HEK293 (cell line): ENCODE measurements at regions of chr1 and their contacts with region 1.

Region 1: DNA sequence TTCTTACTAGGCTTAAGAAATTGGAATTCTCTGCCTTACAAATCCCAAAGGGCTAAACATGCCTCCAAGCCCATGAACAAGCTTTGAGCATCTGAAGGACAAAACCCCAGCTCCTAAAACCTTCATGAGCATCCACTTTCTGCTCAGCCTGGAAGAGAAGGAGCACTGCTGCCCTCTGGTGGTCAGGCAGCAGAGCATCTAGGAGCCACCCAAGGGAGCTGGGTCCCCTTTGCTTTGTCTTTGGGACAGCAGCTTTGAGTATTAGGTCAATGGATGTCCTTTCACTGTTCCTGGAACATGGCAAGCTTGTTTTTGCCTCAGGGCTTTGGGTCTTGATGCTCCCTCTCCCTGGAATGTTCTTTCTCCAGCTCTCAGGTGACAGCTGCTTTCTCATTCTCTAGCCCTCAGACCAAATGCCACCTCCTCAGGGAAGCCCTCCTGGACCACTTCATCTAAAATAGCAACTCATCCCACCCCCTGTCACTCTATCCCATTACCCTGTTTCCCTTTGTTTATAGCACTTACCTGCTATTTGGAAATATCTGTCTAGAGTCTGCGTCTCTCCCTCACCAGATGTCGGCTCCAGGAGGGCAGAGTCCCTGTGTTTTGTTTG is 25.7 kb downstream of the RAB7B start:
- H3K4me3 ChIP-seq: no peak overlapping the region
- H3K27ac ChIP-seq: no peak overlapping the region
- H3K4me1 ChIP-seq: no peaks in the 10 kb centered on the region
- CTCF ChIP-seq: peak; percentile 88

Region 2: GRCh38 chr1:204924013-204924967 is 1053.2 kb before region 1 on chr1:
- CTCF ChIA-PET with region 1: no interaction called
- POLR2A ChIA-PET with region 1: no interaction called
- H3K4me3 ChIP-seq: no peak overlapping the region
- H3K27ac ChIP-seq: no peak overlapping the region
- H3K4me1 ChIP-seq: peaks cover 3% of the 10 kb centered on the region; the same call in 1 of the 2 replicates
- CTCF ChIP-seq: no peak

Region 3: DNA sequence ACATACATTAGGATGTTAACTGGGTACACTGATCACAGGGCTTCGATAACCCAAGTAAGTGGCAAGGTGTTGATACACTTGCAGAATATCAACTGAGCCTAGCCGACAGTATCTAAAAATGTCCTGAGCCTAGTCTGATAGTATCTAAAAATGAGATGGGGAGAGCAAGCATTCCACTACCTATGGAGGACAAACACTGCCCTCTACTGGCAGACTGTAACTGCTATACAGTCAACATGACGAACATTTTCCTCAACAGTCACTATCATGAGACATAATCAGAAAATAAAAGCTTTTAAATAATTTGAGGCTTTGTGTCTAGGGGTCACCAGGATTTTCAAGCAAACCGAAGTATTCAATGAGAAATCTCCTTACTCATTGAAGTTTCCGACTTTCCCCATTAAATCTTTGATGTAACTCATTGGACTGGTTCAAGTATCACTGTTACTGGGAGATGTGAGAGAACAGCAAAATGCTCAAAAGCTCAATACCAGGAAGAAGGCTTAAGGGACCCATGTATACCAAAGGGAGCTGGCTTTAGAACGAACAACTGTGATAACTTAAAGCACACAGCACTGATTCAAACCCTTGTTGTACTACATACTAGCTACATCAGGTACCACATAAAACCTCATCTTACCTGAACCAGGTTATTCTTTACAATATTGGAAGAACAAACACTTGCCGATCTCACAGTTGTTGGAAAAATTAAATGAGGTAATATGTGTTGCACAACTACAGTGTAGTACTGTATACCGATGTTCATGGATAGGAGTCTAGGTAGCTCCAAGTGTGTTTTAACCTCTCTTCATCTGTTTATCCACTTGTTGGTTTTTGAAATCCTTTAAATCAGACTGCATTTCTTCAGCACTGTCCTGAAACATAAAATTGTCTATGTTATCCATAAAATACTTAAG is 266.1 kb before region 1 on chr1:
- CTCF ChIA-PET with region 1: interaction called, 12 read pairs
- POLR2A ChIA-PET with region 1: no interaction called
- H3K4me3 ChIP-seq: no peak overlapping the region
- H3K27ac ChIP-seq: no peak overlapping the region
- H3K4me1 ChIP-seq: peaks cover 7% of the 10 kb centered on the region
- CTCF ChIP-seq: no peak; the same call in 1 of the 2 replicates

Region 4: GRCh38 chr1:205812878-205813754 is 164.4 kb before region 1 on chr1 and contains the start of gene SLC41A1:
- CTCF ChIA-PET with region 1: interaction called, 11 read pairs
- POLR2A ChIA-PET with region 1: no interaction called
- H3K4me3 ChIP-seq: peak within 1 kb of the TSS; percentile 76
- H3K27ac ChIP-seq: peak within 1 kb of the TSS; percentile 58; the same call in 1 of the 2 replicates
- H3K4me1 ChIP-seq: peaks cover 12% of the 10 kb centered on the region
- CTCF ChIP-seq: no peak

Region 5: DNA sequence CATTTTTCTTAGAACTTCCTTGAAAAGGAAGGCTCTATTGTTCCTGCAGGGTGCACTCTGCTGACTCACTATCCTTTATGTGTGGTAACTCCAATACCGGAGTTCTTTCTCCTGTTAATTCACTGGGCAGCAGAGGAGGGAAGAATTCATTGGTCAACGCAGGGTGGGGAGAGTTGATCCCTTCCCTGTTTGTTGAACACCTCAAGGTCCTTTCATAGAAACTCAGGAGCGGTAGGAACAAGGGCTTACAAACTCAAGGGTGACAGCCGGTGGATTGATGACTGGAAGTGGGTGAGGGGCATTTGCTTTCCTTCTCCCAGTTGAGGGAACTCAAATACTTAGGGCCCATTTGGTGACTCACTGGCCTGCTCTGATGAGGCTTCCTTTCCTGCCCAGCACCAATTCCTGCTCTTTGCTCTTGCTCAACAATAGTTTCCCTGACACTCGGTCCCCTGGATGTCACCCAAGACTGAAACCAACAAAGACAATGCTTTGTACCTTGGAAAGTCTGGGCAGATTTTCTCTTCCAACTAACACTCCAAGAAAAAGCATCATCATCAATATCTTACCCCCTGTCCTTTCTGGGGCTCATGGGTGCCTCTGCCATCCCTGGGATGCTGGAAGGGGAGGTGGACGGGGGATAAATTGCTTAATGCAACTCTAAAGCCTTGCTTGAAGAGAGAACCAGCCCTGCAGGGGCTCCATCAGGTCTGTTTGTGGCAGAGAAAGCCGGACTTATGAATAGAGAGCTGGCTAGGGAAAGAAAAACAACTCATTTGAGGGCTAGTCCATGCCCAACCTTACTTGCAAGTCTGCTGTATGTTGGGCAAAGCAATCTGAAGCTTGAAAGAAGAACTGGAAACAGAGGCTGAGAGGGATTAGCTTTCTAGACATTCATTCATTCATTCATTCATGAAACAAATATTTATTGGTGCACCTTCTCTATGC is 43.6 kb before region 1 on chr1:
- CTCF ChIA-PET with region 1: interaction called, 18 read pairs
- POLR2A ChIA-PET with region 1: no interaction called
- H3K4me3 ChIP-seq: no peak overlapping the region
- H3K27ac ChIP-seq: no peak overlapping the region
- H3K4me1 ChIP-seq: no peaks in the 10 kb centered on the region
- CTCF ChIP-seq: no peak

Region 6: DNA sequence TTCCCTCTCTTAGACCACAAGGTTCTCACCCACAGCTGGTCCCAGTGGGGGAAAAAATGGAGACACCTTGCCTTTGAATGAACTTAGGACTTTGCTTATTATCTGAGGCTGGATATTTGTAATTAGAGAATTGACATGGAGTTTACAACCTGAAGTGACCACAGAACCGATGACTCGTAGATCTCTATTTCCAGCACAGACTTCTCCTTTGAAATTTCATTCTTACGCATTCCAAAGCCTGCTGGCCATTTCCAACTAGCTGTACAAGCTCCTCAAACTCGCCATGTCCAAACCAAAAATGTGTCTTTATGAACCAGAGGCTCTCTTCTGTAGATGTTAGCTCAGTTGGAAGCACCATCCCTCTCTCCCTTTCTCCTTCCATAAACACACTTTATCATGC is 13.7 kb after region 1 on chr1:
- CTCF ChIA-PET with region 1: interaction called, 29 read pairs
- POLR2A ChIA-PET with region 1: no interaction called
- H3K4me3 ChIP-seq: no peak overlapping the region
- H3K27ac ChIP-seq: no peak overlapping the region
- H3K4me1 ChIP-seq: no peaks in the 10 kb centered on the region
- CTCF ChIP-seq: no peak

Region 7: GRCh38 chr1:206106328-206107167 is 129.0 kb after region 1 on chr1:
- CTCF ChIA-PET with region 1: interaction called, 151 read pairs
- POLR2A ChIA-PET with region 1: no interaction called
- H3K4me3 ChIP-seq: no peak overlapping the region
- H3K27ac ChIP-seq: no peak overlapping the region
- H3K4me1 ChIP-seq: no peaks in the 10 kb centered on the region
- CTCF ChIP-seq: peak; percentile 81